Activated CD8-positive, alpha-beta T cell treated with anti-CD3 and anti-CD28 coated beads, Interleukin-2, amount 10 ng/mL, durations not matched to agents 7 days and 5 days (primary cell): ENCODE measurements at regions of chr12 and their contacts with region 1.

Region 1: GRCh38 chr12:14960548-14961465 is 594 bp downstream of the ARHGDIB start:
- DNase-seq: peak; percentile 62
- ATAC-seq: peak; percentile 48
- H3K4me3 Mint-ChIP-seq: peak overlapping the region; percentile 98
- H3K27ac Mint-ChIP-seq: peak overlapping the region; percentile 95
- H3K4me1 Mint-ChIP-seq: peaks cover 46% of the 10 kb centered on the region
- H3K27me3 Mint-ChIP-seq: no peaks in the 10 kb centered on the region

Region 2: GRCh38 chr12:14948672-14949071 is 12.1 kb before region 1 on chr12:
- CTCF ChIA-PET with region 1: interaction called, 7 read pairs
- POLR2A ChIA-PET with region 1: interaction called, 31 read pairs
- DNase-seq: peak; percentile 81
- ATAC-seq: peak; percentile 79
- H3K4me3 Mint-ChIP-seq: peak overlapping the region; percentile 76
- H3K27ac Mint-ChIP-seq: peak overlapping the region; percentile 93
- H3K4me1 Mint-ChIP-seq: peaks cover 83% of the 10 kb centered on the region
- H3K27me3 Mint-ChIP-seq: no peaks in the 10 kb centered on the region

Region 3: DNA sequence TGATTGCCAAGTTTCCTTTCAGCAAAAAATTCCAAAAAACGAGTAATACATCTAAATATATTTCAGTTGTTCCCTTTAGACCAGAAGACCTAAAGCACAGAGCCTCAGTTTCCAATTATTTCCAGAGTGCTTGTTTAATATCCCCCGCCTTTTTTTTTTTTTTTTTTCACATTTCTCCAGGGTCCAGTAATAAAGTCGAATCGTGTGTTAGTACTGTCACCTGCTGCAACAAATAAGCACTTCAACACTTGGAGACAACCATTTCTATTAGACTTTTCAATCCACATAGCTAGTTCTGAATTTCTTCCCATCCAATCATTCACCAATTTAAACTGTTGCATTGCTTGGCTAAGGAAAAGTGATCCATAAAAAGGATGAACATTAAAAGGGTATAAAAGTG is 25.6 kb after region 1 on chr12:
- CTCF ChIA-PET with region 1: interaction called, 5 read pairs
- POLR2A ChIA-PET with region 1: interaction called, 12 read pairs
- DNase-seq: no peak
- ATAC-seq: no peak
- H3K4me3 Mint-ChIP-seq: no peak overlapping the region
- H3K27ac Mint-ChIP-seq: no peak overlapping the region
- H3K4me1 Mint-ChIP-seq: peaks cover 30% of the 10 kb centered on the region
- H3K27me3 Mint-ChIP-seq: peaks cover 2% of the 10 kb centered on the region